H1 (cell line): ENCODE measurements at regions of chr18 and their contacts with region 1.

Region 1: DNA sequence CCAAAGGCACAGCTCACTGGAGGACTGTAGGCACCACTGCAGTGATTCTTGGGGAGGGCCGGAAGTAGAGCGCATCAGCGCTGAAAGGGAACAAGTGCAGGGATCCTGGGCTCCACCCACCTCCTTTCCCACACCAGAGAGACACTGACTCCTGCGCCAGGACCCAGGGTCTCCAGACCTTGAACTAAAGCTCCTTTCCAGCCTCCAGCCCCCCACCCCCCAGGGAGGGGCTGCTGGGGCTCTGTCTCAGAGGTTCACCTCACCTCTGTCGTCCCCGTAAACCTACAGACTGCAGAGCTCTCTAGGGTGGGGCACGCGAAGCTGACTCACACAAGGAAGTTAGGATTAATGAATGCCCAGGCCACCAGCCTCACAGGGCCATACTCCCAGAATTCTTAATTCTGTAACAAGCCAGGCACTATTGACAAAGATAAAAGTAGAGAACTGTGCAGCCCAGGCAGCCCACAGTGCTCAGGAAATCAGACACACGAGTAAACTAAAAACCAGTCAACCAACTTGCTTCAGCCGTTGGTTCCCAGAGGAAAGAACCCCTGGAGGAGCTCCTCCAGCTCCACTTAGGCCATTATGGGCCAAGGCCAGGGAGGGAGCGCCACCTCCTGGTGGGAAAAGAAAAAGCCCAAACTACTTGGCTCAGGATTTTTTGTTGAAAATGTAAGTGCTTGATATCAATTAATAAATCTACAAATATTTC is 45.1 kb upstream of the ACAA2 start:
- DNase-seq: peak; percentile 34 to 90
- H3K4me3 ChIP-seq: no peak overlapping the region
- H3K27ac ChIP-seq: no peak overlapping the region
- H3K4me1 ChIP-seq: peaks cover 0 to 9% (median 4%) of the 10 kb centered on the region in 4 experiments; a peak in 6 of 7 replicates
- H3K27me3 ChIP-seq: no peaks in the 10 kb centered on the region
- CTCF ChIP-seq: peak; percentile 66 to 84 (median 80)
- EP300 ChIP-seq: peak in 1 of 2 experiments; percentile 47; a peak in 1 of 3 replicates
- POLR2A ChIP-seq: no peak
- RAD21 ChIP-seq: peak; percentile 97 to 99

Region 2: GRCh38 chr18:49561289-49562193 is 296.9 kb before region 1 on chr18 and contains the start of gene LIPG:
- CTCF ChIA-PET with region 1: interaction called, 24 read pairs
- POLR2A ChIA-PET with region 1: interaction called, 3 read pairs
- DNase-seq: peak; percentile 53 to 81
- H3K4me3 ChIP-seq: peak within 1 kb of the TSS; percentile 57 to 74 (median 62)
- H3K27ac ChIP-seq: peak within 1 kb of the TSS; percentile 57; the same call in 1 of the 2 replicates
- H3K4me1 ChIP-seq: peaks cover 4 to 6% (median 4%) of the 10 kb centered on the region in 4 experiments
- H3K27me3 ChIP-seq: peaks cover 0 to 27% (median 17%) of the 10 kb centered on the region in 4 experiments; a peak in 6 of 7 replicates
- CTCF ChIP-seq: no peak
- EP300 ChIP-seq: no peak
- POLR2A ChIP-seq: peak; percentile 74 to 89
- RAD21 ChIP-seq: no peak
- total RNA-seq, gene LIPG: 9.8 and 11.8 TPM in 2 replicates

Region 3: DNA sequence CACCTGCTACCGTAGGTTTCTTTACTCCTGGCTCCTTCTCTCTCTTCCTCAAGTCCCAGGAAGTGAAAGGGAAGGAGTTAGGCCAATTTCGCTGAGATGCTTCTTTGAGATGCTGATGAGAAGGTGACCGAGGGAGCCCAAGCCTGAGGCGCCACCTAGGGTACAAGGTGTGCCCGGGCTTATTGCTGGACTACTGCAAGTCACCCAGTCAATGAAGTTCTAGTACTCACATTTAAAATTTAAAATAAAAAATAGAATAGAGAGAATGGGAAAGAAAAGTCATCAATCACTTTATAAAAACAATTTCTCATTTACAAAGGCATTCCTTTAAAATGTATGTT is 90.4 kb before region 1 on chr18:
- CTCF ChIA-PET with region 1: interaction called, 62 read pairs
- POLR2A ChIA-PET with region 1: no interaction called
- DNase-seq: peak; percentile 69 to 74
- H3K4me3 ChIP-seq: no peak overlapping the region
- H3K27ac ChIP-seq: no peak overlapping the region
- H3K4me1 ChIP-seq: peaks cover 0 to 6% (median 3%) of the 10 kb centered on the region in 4 experiments; a peak in 4 of 7 replicates
- H3K27me3 ChIP-seq: no peaks in the 10 kb centered on the region
- CTCF ChIP-seq: peak; percentile 85 to 88 (median 88)
- EP300 ChIP-seq: no peak
- POLR2A ChIP-seq: no peak
- RAD21 ChIP-seq: peak; percentile 97

Region 4: GRCh38 chr18:49795612-49796552 is 62.6 kb before region 1 on chr18:
- CTCF ChIA-PET with region 1: interaction called, 11 read pairs
- POLR2A ChIA-PET with region 1: no interaction called
- DNase-seq: no peak
- H3K4me3 ChIP-seq: no peak overlapping the region
- H3K27ac ChIP-seq: no peak overlapping the region
- H3K4me1 ChIP-seq: no peaks in the 10 kb centered on the region
- H3K27me3 ChIP-seq: no peaks in the 10 kb centered on the region
- CTCF ChIP-seq: no peak
- EP300 ChIP-seq: no peak
- POLR2A ChIP-seq: no peak
- RAD21 ChIP-seq: no peak

Region 5: GRCh38 chr18:49869354-49869753 is 10.9 kb after region 1 on chr18:
- CTCF ChIA-PET with region 1: interaction called, 157 read pairs
- POLR2A ChIA-PET with region 1: no interaction called
- DNase-seq: no peak
- H3K4me3 ChIP-seq: no peak overlapping the region
- H3K27ac ChIP-seq: no peak overlapping the region
- H3K4me1 ChIP-seq: no peaks in the 10 kb centered on the region
- H3K27me3 ChIP-seq: no peaks in the 10 kb centered on the region
- CTCF ChIP-seq: no peak
- EP300 ChIP-seq: no peak
- POLR2A ChIP-seq: no peak
- RAD21 ChIP-seq: no peak

Region 6: GRCh38 chr18:49886891-49887764 is 28.7 kb after region 1 on chr18:
- CTCF ChIA-PET with region 1: interaction called, 11 read pairs
- POLR2A ChIA-PET with region 1: interaction called, 3 read pairs
- DNase-seq: peak in 1 of 2 experiments; percentile 54
- H3K4me3 ChIP-seq: no peak overlapping the region
- H3K27ac ChIP-seq: no peak overlapping the region
- H3K4me1 ChIP-seq: peaks cover 0 to 5% (median 2%) of the 10 kb centered on the region in 4 experiments; a peak in 2 of 7 replicates
- H3K27me3 ChIP-seq: no peaks in the 10 kb centered on the region; a peak in 1 of 7 replicates
- CTCF ChIP-seq: peak; percentile 42 to 44 (median 43)
- EP300 ChIP-seq: no peak
- POLR2A ChIP-seq: no peak
- RAD21 ChIP-seq: peak; percentile 51 to 67

Region 7: GRCh38 chr18:50038448-50038847 is 180.0 kb after region 1 on chr18:
- CTCF ChIA-PET with region 1: no interaction called
- POLR2A ChIA-PET with region 1: no interaction called
- DNase-seq: no peak
- H3K4me3 ChIP-seq: no peak overlapping the region
- H3K27ac ChIP-seq: no peak overlapping the region
- H3K4me1 ChIP-seq: no peaks in the 10 kb centered on the region
- H3K27me3 ChIP-seq: no peaks in the 10 kb centered on the region
- CTCF ChIP-seq: no peak
- EP300 ChIP-seq: no peak
- POLR2A ChIP-seq: no peak
- RAD21 ChIP-seq: no peak